ENCODE measurements at regions of chr1 and their contacts with region 1.

Region 1: DNA sequence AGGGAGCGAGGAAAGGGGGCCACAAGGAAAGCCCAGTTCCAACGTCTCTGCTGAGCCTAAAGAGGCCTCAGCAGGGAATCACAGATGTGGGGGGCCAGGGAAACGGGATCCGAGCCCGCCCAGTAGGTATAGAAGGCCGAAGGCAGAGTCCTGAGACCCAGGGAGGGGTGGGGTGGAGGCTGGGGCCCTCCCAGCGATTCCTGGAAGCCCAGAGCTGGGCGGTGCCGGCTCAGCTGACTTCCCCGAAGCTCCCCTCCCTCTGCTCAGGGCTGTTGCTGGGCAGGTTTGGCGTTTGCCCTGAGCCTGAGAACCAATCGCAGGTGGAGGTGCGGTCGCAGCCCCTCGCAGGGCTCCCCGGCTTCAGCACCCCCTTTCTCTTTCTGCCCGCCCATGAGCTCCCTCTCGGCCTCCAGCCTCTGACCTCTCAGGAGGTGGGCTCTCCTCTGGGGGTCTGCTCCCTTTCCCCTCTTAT is 12.8 kb downstream of the ADAMTSL4 start:
- DNase-seq: peak; percentile 93
- H3K4me3 Mint-ChIP-seq: peak overlapping the region; percentile 84
- H3K27ac Mint-ChIP-seq: peak overlapping the region; percentile 98
- H3K4me1 Mint-ChIP-seq: peaks cover 65% of the 10 kb centered on the region
- H3K27me3 Mint-ChIP-seq: no peaks in the 10 kb centered on the region

Region 2: DNA sequence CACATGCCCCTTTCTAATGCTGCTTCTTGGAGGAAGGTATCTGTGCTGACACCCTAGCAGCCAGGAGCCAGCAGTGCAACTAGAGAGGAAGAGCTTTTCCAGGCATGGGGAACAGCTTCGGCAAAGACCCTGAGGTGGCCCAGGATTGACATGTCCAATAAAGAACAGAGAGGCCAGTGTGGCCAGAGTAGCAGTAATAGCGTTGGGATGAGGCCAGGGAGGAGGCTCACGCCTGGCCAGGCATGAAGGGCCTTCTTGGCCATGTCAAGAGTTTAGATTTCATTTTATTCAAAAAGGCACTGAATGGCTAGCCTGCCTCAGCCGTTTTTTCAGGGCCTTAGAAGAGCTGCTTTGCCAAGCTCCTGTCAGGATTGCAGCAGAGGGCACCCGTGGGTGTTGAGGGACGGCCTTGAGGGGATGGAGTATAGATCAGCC is 29.1 kb before region 1 on chr1:
- CTCF ChIA-PET with region 1: interaction called, 10 read pairs
- POLR2A ChIA-PET with region 1: no interaction called
- DNase-seq: no peak
- H3K4me3 Mint-ChIP-seq: no peak overlapping the region
- H3K27ac Mint-ChIP-seq: peak overlapping the region; percentile 9
- H3K4me1 Mint-ChIP-seq: peaks cover 4% of the 10 kb centered on the region
- H3K27me3 Mint-ChIP-seq: no peaks in the 10 kb centered on the region

Region 3: GRCh38 chr1:150572918-150573647 is 11.1 kb after region 1 on chr1:
- CTCF ChIA-PET with region 1: interaction called, 158 read pairs
- POLR2A ChIA-PET with region 1: interaction called, 50 read pairs
- DNase-seq: no peak
- H3K4me3 Mint-ChIP-seq: peak overlapping the region; percentile 99
- H3K27ac Mint-ChIP-seq: peak overlapping the region; percentile 97
- H3K4me1 Mint-ChIP-seq: peaks cover 61% of the 10 kb centered on the region
- H3K27me3 Mint-ChIP-seq: no peaks in the 10 kb centered on the region

Region 4: DNA sequence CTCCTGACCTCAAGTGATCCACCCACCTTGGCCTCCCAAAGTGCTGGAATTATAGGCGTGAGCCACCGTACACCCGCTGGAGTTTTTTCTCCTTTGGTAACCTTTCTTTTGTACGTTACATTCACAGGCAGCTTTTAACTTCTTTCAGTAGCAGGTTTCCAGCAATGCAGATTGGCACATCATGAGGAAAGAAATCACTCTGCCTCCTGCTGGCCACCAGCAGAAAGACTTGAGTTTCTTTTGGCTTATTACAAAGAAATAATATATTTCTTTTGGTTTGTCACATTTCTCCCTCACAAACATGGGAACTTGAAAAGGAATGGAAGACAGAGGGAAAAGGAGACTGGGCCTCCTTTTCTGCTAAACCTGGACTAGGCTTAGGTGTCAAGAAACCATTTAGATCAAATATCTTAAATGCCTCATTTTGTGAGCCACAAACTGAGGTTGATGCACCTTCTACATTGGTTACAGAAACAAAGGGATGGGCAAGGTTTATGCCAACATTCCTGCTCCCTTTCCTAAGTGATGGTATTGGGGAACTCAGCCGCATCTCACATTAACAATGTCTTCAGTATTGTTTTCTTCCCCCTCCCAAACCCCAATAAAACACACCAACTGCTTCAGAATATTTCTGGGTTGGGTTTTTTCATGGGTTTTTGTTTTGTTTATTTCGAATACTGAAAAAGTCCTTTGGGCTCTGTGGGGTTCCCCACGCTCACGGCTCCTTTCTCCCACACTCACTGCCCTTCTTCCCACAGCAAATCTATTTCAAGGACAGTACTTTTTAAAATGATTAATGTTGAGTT is 59.7 kb after region 1 on chr1:
- CTCF ChIA-PET with region 1: interaction called, 19 read pairs
- POLR2A ChIA-PET with region 1: no interaction called
- DNase-seq: peak; percentile 73
- H3K4me3 Mint-ChIP-seq: no peak overlapping the region
- H3K27ac Mint-ChIP-seq: peak overlapping the region; percentile 74
- H3K4me1 Mint-ChIP-seq: peaks cover 73% of the 10 kb centered on the region
- H3K27me3 Mint-ChIP-seq: no peaks in the 10 kb centered on the region

Measured in activated CD4-positive, alpha-beta T cell treated with anti-CD3 and anti-CD28 coated beads, Interleukin-2, amount 10 ng/mL, durations not matched to agents 7 days and 5 days (primary cell).